ENCODE measurements at regions of chr14 and their contacts with region 1.

Region 1: GRCh38 chr14:78644824-78645559 is 474.8 kb downstream of the NRXN3 start:
- DNase-seq: no peak
- ATAC-seq: no peak
- H3K4me3 ChIP-seq: no peak overlapping the region
- H3K27ac ChIP-seq: no peak overlapping the region
- H3K4me1 ChIP-seq: no peaks in the 10 kb centered on the region
- H3K27me3 ChIP-seq: peaks cover 0 to 4% (median 2%) of the 10 kb centered on the region in 3 donors
- CTCF ChIP-seq: no peak

Region 2: GRCh38 chr14:78605897-78606500 is 39.0 kb before region 1 on chr14:
- intact Hi-C with region 1: no loop called
- DNase-seq: no peak
- ATAC-seq: no peak
- H3K4me3 ChIP-seq: no peak overlapping the region
- H3K27ac ChIP-seq: no peak overlapping the region
- H3K4me1 ChIP-seq: no peaks in the 10 kb centered on the region
- H3K27me3 ChIP-seq: peaks cover 0 to 5% (median 0%) of the 10 kb centered on the region in 3 donors
- CTCF ChIP-seq: no peak

Region 3: DNA sequence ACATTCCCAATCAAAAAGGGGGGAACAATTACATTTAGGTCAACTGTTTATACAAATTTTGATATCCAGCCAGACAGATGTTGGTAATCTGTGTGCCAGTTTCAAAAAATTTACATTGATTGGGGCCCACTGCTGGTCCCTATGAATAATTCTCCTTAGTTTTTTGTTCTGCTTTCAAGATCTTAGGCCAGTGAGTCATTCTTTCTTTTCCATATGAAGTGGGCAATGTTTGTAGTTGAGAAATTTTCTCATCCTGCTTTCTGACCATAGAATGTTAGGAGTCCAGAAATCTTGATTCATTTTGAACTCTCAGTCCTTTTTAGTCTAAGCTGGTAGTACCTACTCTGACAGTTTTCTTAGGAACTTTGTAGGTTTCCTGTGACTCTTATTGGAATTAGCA is 1322.0 kb after region 1 on chr14:
- intact Hi-C with region 1: loop called in 1 of 2 experiments (anchors 5 kb)
- DNase-seq: no peak
- ATAC-seq: no peak
- H3K4me3 ChIP-seq: no peak overlapping the region
- H3K27ac ChIP-seq: no peak overlapping the region
- H3K4me1 ChIP-seq: no peaks in the 10 kb centered on the region
- H3K27me3 ChIP-seq: no peaks in the 10 kb centered on the region
- CTCF ChIP-seq: no peak